Aorta (tissue), 5 donors: ENCODE measurements at regions of chr3 and their contacts with region 1.

Region 1: DNA sequence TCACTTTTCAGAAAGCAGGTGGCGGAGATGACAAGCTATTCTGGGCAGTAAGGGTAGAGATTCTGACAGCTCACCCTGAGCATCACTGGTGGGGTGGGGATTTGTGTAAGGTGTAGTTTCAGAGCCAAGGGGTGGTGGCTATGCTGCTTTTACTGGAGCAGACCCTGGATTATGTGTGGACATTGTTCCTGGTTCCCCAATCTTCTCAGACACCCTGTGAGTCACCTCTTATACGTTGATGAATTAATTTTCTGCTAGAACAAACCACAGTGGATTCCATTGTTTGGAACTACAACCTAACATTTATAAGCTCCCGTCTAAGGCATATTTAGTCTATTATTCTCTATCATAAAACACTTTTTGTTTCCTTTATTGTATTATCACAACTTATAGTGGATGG is 169.5 kb upstream of the COL8A1 start:
- DNase-seq: no peak
- ATAC-seq: no peak
- H3K4me3 ChIP-seq: no peak overlapping the region
- H3K27ac ChIP-seq: peak overlapping the region in 1 of 2 donors; percentile 36
- H3K4me1 ChIP-seq: peaks cover 0 to 7% of the 10 kb centered on the region in 2 donors
- H3K27me3 ChIP-seq: no peaks in the 10 kb centered on the region

Region 2: DNA sequence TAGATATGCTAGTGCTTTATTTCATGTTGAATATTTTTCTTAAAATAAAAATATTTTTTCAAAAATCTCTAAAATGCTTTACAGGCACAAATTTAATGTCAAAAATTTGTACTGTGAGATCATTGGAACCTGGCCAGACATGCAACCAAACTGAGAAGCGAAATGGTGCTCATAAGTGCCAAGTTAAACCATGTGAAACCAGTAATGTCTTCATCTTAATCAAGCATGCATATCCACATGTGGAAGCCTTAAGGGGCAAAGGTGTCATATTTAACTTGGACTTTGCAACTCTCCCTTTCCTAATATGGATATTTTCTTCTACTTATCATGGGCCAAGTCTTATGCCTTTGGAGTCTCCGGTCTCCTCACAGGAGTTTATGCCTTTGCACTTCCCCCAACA is 39.4 kb before region 1 on chr3:
- intact Hi-C with region 1: loop called in 1 of 2 experiments (anchors 5 kb)
- DNase-seq: no peak
- ATAC-seq: no peak
- H3K4me3 ChIP-seq: no peak overlapping the region
- H3K27ac ChIP-seq: no peak overlapping the region
- H3K4me1 ChIP-seq: peaks cover 0 to 3% of the 10 kb centered on the region in 2 donors
- H3K27me3 ChIP-seq: no peaks in the 10 kb centered on the region